ENCODE measurements at regions of chr9 and their contacts with region 1.

Region 1: DNA sequence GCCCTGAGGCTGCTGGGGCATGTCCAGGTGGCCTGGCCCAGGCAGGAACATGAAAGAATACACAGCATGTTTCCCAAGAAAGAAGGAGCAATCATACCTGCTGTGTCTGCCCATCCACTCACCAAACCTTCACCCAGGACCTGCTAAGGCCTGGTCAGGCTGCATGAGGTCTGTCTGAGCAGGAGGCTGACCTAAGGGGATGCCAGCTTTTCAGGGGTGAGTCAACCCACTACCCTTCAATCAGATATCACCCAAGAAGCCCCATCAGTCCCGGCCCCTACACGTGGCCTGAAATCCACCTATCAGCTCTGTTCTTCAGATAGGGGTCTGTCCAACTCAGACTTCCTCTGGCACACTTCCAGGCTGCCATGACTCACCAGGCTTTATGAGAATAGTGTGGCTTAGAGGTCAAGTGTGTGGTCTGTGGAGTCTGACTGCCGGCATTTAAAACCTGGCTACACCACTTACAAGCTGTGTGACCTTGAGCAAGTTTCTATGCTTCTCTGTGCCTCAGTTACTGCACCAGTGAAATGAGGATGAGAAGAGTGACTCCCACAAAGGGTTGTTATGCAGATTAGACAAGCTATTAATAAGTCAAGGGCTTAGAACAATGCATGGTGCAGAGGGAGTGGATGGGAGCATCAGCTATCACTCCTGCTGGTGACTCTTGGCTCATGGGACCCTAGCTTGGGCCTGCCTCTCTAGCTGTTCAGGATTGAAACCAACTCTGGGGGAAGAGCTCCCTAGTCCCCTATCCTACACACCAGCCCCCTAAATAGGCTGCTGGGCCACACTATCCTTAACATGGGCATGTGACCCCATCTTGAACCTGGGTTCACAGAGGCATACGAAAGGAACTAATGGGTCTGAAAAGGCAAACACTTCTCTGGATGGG is 130.3 kb downstream of the PAX5 start:
- DNase-seq: peak; percentile 65 to 76
- H3K4me3 ChIP-seq: no peak overlapping the region
- H3K27ac ChIP-seq: no peak overlapping the region
- H3K4me1 ChIP-seq: no peaks in the 10 kb centered on the region
- H3K27me3 ChIP-seq: peaks cover 61% of the 10 kb centered on the region
- CTCF ChIP-seq: no peak

Region 2: DNA sequence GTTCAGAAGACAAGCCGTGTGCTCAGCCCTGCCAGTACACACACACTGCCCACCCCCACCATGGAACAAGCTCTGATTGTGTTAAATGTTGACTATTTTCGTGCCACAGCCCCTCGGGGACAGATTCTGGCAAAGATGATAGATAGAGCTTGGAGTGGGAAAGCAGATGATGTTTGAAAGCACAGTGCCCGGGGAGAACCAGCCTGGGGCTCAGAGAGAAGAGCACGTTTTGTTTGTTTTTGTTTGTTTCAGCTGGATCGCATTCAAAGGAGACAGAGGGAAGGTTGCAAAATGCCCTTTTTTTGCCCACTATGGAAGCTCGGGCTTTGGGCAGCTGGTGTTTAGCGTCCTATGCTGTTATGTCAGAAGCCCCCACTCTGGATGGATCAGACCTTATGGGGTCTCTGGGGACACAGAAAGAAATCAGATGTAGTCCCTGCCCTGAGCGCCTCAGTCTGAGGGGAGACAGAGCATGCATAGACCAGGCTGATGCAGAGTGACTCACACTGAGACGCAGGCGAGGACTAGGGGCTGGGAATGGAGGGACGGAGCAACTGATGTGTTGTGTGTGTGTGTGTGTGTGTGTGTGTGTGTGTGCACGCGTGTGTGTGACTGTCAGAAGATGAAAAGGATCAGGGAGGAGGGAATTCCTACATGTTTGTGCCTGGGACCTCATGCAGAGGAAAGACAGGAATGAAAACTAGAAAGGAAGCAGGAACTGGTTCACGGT is 101.4 kb before region 1 on chr9:
- CTCF ChIA-PET with region 1: no interaction called
- POLR2A ChIA-PET with region 1: no interaction called
- intact Hi-C with region 1: no loop called
- DNase-seq: no peak
- H3K4me3 ChIP-seq: no peak overlapping the region
- H3K27ac ChIP-seq: no peak overlapping the region
- H3K4me1 ChIP-seq: no peaks in the 10 kb centered on the region
- H3K27me3 ChIP-seq: peaks cover 39% of the 10 kb centered on the region; the same call in 1 of the 2 replicates
- CTCF ChIP-seq: no peak

Region 3: DNA sequence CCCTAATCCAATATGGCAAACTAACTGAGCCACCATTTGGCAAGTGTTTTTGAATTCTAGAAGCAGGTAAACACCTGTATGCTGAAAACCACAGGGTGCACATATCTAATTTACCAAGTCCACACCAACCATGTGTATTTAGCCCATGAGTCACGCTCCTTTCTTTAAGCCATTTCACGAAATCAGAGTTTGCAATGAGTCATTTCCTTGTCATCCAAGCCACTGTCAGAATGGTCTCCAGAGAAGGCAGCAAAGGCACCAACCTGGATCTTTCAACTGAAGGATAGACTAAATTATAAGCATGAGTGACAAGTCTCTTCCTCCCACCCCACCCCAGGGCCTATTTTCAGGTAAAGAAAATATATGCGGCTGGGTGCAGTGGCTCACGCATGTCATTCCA is 20.3 kb after region 1 on chr9:
- CTCF ChIA-PET with region 1: no interaction called
- POLR2A ChIA-PET with region 1: no interaction called
- intact Hi-C with region 1: loop called (anchors 1 kb)
- DNase-seq: peak; percentile 50 to 95
- H3K4me3 ChIP-seq: no peak overlapping the region
- H3K27ac ChIP-seq: 0 out of 2 replicates have a peak overlapping the region, but pooled peaks have one; percentile 32
- H3K4me1 ChIP-seq: peaks cover 22% of the 10 kb centered on the region
- H3K27me3 ChIP-seq: no peaks in the 10 kb centered on the region
- CTCF ChIP-seq: no peak